Thyroid gland (tissue), 4 donors: ENCODE measurements at regions of chr5 and their contacts with region 1.

Region 1: GRCh38 chr5:139863855-139864558 is 68.4 kb downstream of the PSD2 start:
- DNase-seq: peak; percentile 75
- H3K4me3 ChIP-seq: no peak overlapping the region
- H3K27ac ChIP-seq: no peak overlapping the region
- H3K4me1 ChIP-seq: peaks cover 9 to 16% of the 10 kb centered on the region in 2 donors
- H3K27me3 ChIP-seq: no peaks in the 10 kb centered on the region
- CTCF ChIP-seq: peak; percentile 85 to 95 (median 89)
- POLR2A ChIP-seq: no peak

Region 2: DNA sequence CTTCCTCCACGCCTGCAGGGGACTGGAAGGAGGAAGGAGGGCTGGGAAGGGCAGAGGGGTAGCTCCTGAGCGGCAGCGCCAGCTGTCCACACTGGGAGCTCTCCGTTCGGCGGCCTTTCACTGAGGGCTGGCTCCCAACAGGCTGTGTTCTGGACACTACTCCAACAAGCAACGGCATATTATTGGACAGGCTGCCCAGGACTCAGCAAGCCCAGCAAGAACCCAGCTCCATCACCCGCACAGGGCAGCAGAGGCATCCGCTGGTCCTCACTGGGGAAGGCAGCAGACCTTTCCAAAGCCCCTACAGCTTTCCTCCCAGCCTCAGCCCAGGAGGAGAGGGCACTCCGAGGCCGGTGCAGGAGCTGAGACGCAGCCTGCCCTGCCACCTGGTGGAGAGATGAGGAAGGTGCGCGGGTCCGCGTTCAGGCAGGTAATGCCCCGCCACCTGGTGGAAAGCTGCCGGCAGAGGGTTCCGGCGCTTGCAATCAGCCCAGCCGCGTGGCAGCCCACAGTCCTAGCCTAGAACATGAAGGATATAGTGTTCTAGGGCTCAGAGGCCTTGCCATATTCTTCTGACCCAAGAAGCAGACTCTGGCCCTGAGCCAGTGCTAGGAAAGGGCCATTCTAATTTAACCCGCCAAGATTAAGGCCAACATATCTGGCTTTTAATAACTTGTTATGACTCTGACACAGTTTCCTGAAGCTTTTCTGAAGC is 104.7 kb after region 1 on chr5:
- intact Hi-C with region 1: loop called (anchors 5 kb)
- DNase-seq: peak; percentile 92 to 94
- H3K4me3 ChIP-seq: no peak overlapping the region
- H3K27ac ChIP-seq: no peak overlapping the region
- H3K4me1 ChIP-seq: peaks cover 0 to 5% of the 10 kb centered on the region in 2 donors
- H3K27me3 ChIP-seq: no peaks in the 10 kb centered on the region
- CTCF ChIP-seq: peak; percentile 99 to 100 (median 100)
- POLR2A ChIP-seq: no peak